HCT116 (cell line): ENCODE measurements at regions of chr2 and their contacts with region 1.

Region 1: GRCh38 chr2:130332271-130333073 is 10.2 kb upstream of the IMP4 start:
- DNase-seq: peak; percentile 53
- ATAC-seq: peak; percentile 64
- H3K4me3 ChIP-seq: no peak overlapping the region
- H3K27ac ChIP-seq: no peak overlapping the region
- H3K4me1 ChIP-seq: peaks cover 2 to 33% of the 10 kb centered on the region in 2 experiments; a peak in 3 of 4 replicates
- H3K27me3 ChIP-seq: peaks cover 13% of the 10 kb centered on the region
- CTCF ChIP-seq: peak; percentile 95 to 98 (median 95)
- POLR2A ChIP-seq: no peak
- RAD21 ChIP-seq: peak; percentile 98

Region 2: DNA sequence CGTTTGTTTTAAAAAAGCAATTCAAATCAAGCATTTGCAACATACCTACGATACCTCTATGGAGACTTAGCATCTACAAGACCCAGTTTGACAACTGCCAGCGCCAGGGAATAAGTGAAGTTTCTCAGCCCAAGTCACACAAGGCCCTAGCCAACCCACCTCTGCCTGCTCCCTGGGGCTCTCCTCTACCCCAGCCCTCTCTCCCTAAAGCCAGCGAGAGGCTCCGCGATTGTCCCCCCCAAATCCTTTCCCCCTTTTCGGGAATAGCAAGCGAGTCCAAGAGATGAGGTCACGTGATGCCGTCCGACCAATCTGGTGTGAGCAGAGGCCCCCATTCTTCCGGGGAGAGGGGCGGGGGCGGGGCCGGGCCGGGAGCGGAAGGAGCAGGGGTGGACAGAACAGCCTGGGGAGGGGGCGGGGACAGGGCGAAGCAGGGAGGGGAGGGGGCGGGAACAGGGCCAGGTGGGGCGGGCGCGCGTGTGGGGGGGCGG is 455.1 kb before region 1 on chr2:
- CTCF ChIA-PET with region 1: no interaction called
- POLR2A ChIA-PET with region 1: no interaction called
- RAD21 ChIA-PET with region 1: no interaction called
- intact Hi-C with region 1: loop called (anchors 5 kb)
- DNase-seq: peak; percentile 34
- ATAC-seq: peak; percentile 89
- H3K4me3 ChIP-seq: peak overlapping the region; percentile 45 to 57
- H3K27ac ChIP-seq: no peak overlapping the region
- H3K4me1 ChIP-seq: peaks cover 0 to 6% of the 10 kb centered on the region in 2 experiments; a peak in 2 of 4 replicates
- H3K27me3 ChIP-seq: no peaks in the 10 kb centered on the region
- CTCF ChIP-seq: no peak
- POLR2A ChIP-seq: no peak
- RAD21 ChIP-seq: no peak

Region 3: DNA sequence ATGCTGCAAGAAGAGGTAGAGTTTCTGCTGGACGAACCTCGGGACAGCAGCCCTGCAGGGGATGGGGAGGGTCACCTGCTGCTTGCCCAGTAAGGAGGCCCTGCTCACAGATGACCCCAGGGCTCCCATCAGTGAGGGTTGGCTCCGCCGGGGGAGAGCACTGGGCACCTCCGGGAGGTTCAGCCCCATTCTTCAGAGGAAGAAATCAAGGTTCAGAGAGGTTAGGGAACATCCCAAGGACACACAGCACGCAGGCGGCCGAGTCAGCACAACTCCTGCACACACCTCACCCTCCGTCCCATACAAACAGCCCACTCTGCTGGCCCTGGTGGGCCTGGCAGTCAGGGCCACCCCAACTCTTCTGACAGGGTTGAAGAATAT is 175.9 kb before region 1 on chr2:
- CTCF ChIA-PET with region 1: interaction called, 7 read pairs
- POLR2A ChIA-PET with region 1: no interaction called
- RAD21 ChIA-PET with region 1: interaction called in 1 of 2 experiments, 3 read pairs
- intact Hi-C with region 1: loop called (anchors 1 kb)
- DNase-seq: no peak
- ATAC-seq: peak; percentile 1; the same call in 1 of the 2 replicates
- H3K4me3 ChIP-seq: no peak overlapping the region
- H3K27ac ChIP-seq: no peak overlapping the region
- H3K4me1 ChIP-seq: no peaks in the 10 kb centered on the region
- H3K27me3 ChIP-seq: no peaks in the 10 kb centered on the region
- CTCF ChIP-seq: no peak
- POLR2A ChIP-seq: no peak
- RAD21 ChIP-seq: no peak

Region 4: DNA sequence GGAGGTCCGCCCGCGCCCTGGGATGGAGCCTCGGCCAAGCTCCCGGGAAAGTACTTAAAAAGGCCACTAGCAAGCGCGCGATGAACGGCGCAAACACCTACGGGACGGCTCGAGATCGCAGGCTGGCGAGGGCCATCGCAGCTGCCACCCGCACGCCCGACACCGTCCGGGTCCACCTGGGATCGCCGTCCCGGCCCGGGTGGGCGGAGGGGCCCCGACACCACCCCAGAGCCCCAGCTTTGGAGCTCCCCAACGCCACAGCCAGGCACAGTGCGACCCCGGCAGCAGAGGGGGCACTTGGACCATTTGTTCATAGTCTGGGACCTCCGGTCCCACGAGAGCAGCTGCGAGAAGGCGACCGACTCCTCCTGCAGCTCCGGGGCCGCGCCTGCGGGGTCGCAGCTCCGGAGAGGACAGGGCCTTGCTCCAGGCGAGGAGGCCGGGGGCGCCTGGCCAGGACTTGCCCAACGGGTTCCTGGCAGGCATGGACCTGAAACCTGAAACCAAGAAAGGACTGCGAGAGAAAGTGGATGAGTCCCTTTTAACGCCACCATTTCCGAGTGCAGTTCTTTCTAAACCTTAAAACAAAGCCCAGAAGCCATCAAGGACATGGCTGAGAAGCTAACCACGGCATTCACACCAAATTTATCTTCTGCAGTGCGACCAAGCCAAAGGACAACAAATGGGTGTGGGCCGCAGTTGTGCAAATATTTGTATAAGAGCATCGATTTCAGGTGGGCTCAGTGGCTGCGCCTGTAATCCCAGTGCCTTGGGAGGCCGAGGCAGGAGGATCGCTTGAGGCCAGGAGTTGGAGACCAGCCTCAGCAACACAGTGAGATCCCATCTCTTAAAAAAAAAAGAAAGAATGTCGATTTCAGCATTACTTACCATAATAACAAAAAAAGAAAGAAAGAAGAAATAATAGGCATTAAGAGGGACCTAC is 43.7 kb before region 1 on chr2:
- CTCF ChIA-PET with region 1: interaction called, 18 read pairs
- POLR2A ChIA-PET with region 1: interaction called, 3 read pairs
- RAD21 ChIA-PET with region 1: interaction called in 1 of 2 experiments, 3 read pairs
- intact Hi-C with region 1: loop called (anchors 1 kb)
- DNase-seq: peak; percentile 33
- ATAC-seq: peak; percentile 91
- H3K4me3 ChIP-seq: peak overlapping the region; percentile 35 to 49
- H3K27ac ChIP-seq: peak overlapping the region; percentile 50; the same call in 1 of the 2 replicates
- H3K4me1 ChIP-seq: peaks cover 6 to 17% of the 10 kb centered on the region in 2 experiments; a peak in 3 of 4 replicates
- H3K27me3 ChIP-seq: no peaks in the 10 kb centered on the region; the same call in 1 of the 2 replicates
- CTCF ChIP-seq: peak; percentile 25 to 73 (median 45); a peak in 5 of 6 replicates
- POLR2A ChIP-seq: no peak
- RAD21 ChIP-seq: peak; percentile 61

Region 5: DNA sequence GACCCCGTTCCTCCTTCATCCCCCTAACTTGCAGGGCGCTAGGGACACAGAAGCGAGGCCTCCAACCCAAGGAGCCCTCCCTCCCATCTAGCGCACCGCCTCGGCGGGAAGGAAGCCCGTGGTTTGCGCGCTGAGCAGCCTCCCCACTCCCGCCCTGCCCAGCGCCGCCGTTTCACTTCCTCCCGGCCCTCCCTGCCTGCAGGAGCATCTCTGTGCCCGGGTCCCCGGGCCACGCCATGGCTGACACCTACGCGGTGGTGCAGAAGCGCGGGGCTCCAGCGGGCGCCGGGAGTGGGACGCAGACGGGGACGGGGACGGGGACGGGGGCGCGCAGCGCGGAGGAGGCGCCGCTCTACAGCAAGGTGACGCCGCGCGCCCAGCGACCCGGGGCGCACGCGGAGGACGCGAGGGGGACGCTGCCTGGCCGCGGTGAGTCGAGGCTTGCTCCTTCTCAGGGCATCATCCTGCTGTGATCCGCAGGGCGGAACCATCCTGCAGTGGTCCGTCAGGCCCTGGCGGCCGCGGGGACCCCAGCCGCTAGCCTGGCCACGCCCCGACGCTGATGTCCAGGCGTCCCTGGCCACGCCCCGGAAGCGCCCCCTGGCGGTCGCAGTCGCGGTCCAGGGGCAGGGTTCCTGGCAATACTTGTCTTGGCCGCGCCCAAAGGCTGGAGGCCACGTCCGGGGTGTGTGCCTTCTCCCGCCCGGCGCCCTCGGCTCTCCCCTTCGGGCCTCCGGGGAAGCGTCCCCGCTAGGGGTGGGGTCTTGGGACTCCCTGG is 39.8 kb after region 1 on chr2:
- CTCF ChIA-PET with region 1: no interaction called
- POLR2A ChIA-PET with region 1: interaction called, 3 read pairs
- RAD21 ChIA-PET with region 1: no interaction called
- intact Hi-C with region 1: loop called (anchors 5 kb)
- DNase-seq: peak; percentile 60
- ATAC-seq: peak; percentile 93
- H3K4me3 ChIP-seq: peak overlapping the region; percentile 75 to 82
- H3K27ac ChIP-seq: peak overlapping the region; percentile 80
- H3K4me1 ChIP-seq: peaks cover 17 to 32% of the 10 kb centered on the region in 2 experiments; a peak in 3 of 4 replicates
- H3K27me3 ChIP-seq: no peaks in the 10 kb centered on the region
- CTCF ChIP-seq: peak; percentile 56 to 90 (median 69); a peak in 5 of 6 replicates
- POLR2A ChIP-seq: peak; percentile 85
- RAD21 ChIP-seq: peak; percentile 42

Region 6: DNA sequence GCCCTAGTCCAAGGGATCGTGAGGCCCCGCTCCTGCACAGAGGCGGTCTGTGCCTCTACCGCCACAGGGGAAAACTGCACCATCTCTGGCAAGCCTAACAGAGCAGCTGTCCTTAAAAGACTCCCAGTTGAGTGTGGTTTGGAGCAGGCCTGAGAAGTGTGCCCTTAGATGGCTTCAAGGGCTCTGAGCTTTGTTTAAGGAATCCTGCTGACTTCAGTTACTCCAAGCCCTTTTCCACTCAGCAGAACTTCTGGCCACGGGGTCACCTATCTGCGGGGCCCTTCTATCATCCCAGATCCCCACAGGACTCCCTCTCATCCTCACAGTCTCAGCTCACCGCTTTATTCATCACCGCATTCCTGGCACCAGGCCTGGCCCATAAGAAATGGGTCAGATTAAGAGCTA is 1326.7 kb after region 1 on chr2:
- CTCF ChIA-PET with region 1: no interaction called
- POLR2A ChIA-PET with region 1: no interaction called
- RAD21 ChIA-PET with region 1: no interaction called
- intact Hi-C with region 1: no loop called
- DNase-seq: no peak
- ATAC-seq: no peak
- H3K4me3 ChIP-seq: no peak overlapping the region
- H3K27ac ChIP-seq: no peak overlapping the region
- H3K4me1 ChIP-seq: no peaks in the 10 kb centered on the region
- H3K27me3 ChIP-seq: peaks cover 12% of the 10 kb centered on the region; the same call in 1 of the 2 replicates
- CTCF ChIP-seq: no peak
- POLR2A ChIP-seq: no peak
- RAD21 ChIP-seq: no peak